Activated CD4-positive, alpha-beta memory T cell treated with anti-CD3 and anti-CD28 coated beads for 36 hours (primary cell): ENCODE measurements at regions of chr2 and their contacts with region 1.

Region 1: DNA sequence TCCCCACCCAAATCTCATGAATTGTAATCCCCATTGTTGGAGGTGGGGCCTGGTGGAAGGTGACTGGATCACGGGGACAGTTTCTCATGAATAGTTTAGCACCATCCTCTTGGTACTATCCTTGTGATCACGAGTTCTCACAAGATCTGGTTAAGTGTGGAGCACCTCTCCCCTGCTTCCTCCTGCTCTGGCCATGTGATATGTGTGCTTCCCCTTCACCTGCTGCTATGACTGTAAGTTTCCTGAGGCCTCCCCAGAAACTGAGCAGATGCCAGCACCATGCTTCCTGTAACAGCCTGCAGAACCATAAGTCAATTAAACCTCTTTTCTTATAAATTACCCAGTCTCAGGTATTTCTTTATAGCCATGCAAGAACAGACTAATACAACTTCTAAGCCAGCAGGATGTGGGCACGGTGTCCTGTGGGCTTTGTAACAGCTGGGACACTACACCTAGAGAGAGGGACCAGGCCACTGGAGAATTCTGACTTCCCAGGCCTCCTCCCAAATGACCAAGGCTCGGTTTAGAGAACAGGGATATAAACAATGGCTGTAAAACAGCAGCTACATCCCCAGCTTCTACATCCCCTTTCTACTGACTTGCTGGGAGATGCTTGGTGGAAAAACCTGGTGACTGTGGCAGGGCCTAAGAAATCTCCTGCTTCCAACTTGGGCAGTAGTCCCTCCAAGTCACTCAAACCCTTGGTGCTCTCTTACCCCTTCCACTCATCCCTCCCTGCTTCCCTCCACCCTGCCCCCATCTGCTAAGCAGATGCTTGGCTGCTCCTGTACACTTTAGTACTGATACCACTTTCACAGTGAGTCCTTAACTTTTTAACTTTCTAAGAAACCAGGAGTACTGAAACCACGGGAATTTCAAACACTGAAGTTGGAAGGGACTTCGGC is 10.3 kb downstream of the STAT1 start:
- DNase-seq: no peak
- H3K4me3 Mint-ChIP-seq: no peak overlapping the region
- H3K27ac Mint-ChIP-seq: peak overlapping the region; percentile 63
- H3K4me1 Mint-ChIP-seq: peaks cover 83% of the 10 kb centered on the region
- H3K27me3 Mint-ChIP-seq: no peaks in the 10 kb centered on the region

Region 2: GRCh38 chr2:190979906-190980629 is 23.6 kb before region 1 on chr2:
- CTCF ChIA-PET with region 1: no interaction called
- POLR2A ChIA-PET with region 1: interaction called, 3 read pairs
- intact Hi-C with region 1: loop called (anchors 2 kb)
- DNase-seq: no peak
- H3K4me3 Mint-ChIP-seq: no peak overlapping the region
- H3K27ac Mint-ChIP-seq: peak overlapping the region; percentile 54
- H3K4me1 Mint-ChIP-seq: peaks cover 61% of the 10 kb centered on the region
- H3K27me3 Mint-ChIP-seq: no peaks in the 10 kb centered on the region